ENCODE measurements at regions of chr17 and their contacts with region 1.

Region 1: GRCh38 chr17:14926526-14927122 is 338.5 kb downstream of the PMP22 start:
- H3K4me3 ChIP-seq: no peak overlapping the region
- H3K27ac ChIP-seq: no peak overlapping the region
- H3K4me1 ChIP-seq: no peaks in the 10 kb centered on the region
- CTCF ChIP-seq: peak; percentile 27; the same call in 1 of the 2 replicates

Region 2: DNA sequence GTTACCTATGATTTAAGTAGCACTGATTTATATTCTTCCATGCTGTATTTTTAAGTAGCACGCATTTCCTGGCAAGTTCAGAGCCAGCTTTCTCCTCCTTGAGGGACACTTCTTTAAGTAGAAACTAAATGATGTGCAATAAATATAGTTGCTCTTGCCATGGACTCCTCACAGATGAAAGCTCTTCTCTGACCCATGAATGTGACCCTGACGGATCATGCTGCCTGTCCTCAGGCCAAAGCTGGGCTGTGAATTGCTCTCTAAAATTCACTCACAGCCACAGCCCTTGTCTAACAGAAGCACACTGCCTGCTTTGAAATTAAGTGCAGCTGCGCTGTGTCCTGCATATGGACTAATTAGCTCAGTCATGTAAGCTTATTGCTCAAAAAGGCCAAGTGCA is 100.3 kb before region 1 on chr17:
- CTCF ChIA-PET with region 1: interaction called, 11 read pairs
- POLR2A ChIA-PET with region 1: no interaction called
- H3K4me3 ChIP-seq: no peak overlapping the region
- H3K27ac ChIP-seq: no peak overlapping the region
- H3K4me1 ChIP-seq: no peaks in the 10 kb centered on the region
- CTCF ChIP-seq: no peak

Region 3: DNA sequence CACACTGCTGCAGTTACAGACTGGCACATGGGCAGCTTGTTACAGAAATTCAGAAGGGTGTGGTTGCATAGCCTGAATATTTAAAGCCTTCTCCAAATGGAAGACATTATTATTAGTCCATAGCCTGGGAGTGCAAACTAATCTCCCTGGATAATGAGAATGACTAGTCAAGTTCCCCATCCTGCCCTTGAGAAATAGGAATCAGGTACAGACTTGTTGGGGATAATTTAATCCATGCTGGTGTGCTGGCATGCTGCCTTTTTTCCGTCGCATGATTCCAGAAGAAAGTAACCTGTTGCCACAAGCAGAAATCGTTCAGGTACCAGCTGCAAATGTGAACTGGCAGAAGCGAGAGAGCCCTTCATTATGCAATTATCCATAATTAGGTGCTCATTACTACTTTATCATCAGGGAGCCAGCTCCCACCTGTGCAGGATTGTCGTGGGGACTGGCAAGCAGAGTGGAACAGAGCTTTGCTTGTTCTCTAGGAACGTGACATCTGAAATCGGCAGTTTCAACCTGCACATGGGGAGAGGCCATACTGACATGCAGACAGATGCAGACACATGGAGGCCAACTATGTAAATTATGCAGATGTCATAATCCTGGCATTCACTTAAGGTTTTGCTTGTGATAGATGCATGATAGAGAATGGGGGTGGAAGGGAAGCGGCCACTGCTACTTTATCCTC is 80.9 kb before region 1 on chr17:
- CTCF ChIA-PET with region 1: no interaction called
- POLR2A ChIA-PET with region 1: no interaction called
- H3K4me3 ChIP-seq: no peak overlapping the region
- H3K27ac ChIP-seq: no peak overlapping the region
- H3K4me1 ChIP-seq: no peaks in the 10 kb centered on the region
- CTCF ChIP-seq: no peak

Region 4: GRCh38 chr17:14886240-14886639 is 40.4 kb before region 1 on chr17:
- CTCF ChIA-PET with region 1: interaction called, 69 read pairs
- POLR2A ChIA-PET with region 1: interaction called, 3 read pairs
- H3K4me3 ChIP-seq: no peak overlapping the region
- H3K27ac ChIP-seq: no peak overlapping the region
- H3K4me1 ChIP-seq: no peaks in the 10 kb centered on the region
- CTCF ChIP-seq: no peak

Region 5: DNA sequence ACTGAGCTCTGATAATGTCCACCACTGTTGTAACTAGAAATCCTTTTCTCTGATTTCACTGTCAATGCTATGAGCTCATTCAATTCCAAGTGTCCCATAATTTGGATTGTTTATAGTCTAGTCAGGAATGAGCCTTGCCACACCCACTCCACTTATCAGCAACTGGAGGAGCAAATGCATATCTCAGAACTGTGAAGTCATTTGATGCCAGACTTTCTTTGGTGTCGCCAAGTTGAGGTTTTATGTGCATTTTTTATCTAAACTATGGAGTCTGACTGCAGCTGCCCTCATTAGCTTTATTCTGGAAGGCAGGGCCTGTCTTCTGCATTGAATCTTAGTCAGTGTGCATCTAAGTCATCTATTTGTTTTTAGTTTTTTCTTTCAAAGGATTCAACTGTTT is 22.8 kb before region 1 on chr17:
- CTCF ChIA-PET with region 1: interaction called, 14 read pairs
- POLR2A ChIA-PET with region 1: no interaction called
- H3K4me3 ChIP-seq: no peak overlapping the region
- H3K27ac ChIP-seq: no peak overlapping the region
- H3K4me1 ChIP-seq: peaks cover 8% of the 10 kb centered on the region; the same call in 1 of the 2 replicates
- CTCF ChIP-seq: no peak

Region 6: DNA sequence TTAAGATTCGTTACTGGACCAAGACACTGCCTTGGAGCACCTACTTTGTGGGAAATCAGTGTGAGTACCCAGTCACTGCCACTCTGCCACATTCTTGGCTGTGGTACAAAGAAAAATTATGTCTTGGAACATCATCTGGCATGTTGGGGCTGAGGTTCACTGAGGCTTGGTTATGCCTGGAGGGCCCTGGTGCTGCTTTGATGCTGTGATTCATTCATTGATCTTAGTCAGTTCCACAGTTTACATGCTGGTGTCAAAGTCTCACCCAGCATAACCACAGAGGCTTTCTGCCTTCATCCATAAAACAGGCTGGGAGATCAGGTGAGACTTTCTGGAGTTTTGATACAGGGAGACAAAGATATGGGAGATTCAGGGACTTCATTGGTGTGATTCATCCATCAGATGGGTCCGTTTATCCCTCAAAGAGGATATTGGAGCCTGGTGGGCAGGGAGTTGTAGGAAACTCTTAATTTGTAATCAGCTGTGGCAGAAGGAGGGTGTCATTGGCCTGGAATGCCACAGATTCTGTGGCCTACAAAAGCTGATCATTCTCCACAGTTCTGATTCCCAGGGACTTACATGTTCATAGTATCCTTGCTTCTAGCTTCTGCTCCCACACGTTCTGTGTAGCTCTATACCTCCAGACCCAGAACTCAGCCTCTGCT is 16.0 kb after region 1 on chr17:
- CTCF ChIA-PET with region 1: interaction called, 20 read pairs
- POLR2A ChIA-PET with region 1: no interaction called
- H3K4me3 ChIP-seq: no peak overlapping the region
- H3K27ac ChIP-seq: no peak overlapping the region
- H3K4me1 ChIP-seq: no peaks in the 10 kb centered on the region
- CTCF ChIP-seq: no peak

Region 7: GRCh38 chr17:15157051-15157450 is 230.4 kb after region 1 on chr17:
- CTCF ChIA-PET with region 1: interaction called, 21 read pairs
- POLR2A ChIA-PET with region 1: no interaction called
- H3K4me3 ChIP-seq: no peak overlapping the region
- H3K27ac ChIP-seq: no peak overlapping the region
- H3K4me1 ChIP-seq: no peaks in the 10 kb centered on the region
- CTCF ChIP-seq: no peak